ENCODE measurements at regions of chr22 and their contacts with region 1.

Region 1: GRCh38 chr22:37643225-37643847 is 3.9 kb downstream of the SH3BP1 start:
- DNase-seq: peak; percentile 67 to 95 (median 82)
- ATAC-seq: peak; percentile 88
- H3K4me3 ChIP-seq: no peak overlapping the region
- H3K27ac ChIP-seq: no peak overlapping the region
- H3K4me1 ChIP-seq: peaks cover 4 to 52% of the 10 kb centered on the region in 2 donors
- H3K27me3 ChIP-seq: no peaks in the 10 kb centered on the region
- CTCF ChIP-seq: peak; percentile 87 to 98

Region 2: DNA sequence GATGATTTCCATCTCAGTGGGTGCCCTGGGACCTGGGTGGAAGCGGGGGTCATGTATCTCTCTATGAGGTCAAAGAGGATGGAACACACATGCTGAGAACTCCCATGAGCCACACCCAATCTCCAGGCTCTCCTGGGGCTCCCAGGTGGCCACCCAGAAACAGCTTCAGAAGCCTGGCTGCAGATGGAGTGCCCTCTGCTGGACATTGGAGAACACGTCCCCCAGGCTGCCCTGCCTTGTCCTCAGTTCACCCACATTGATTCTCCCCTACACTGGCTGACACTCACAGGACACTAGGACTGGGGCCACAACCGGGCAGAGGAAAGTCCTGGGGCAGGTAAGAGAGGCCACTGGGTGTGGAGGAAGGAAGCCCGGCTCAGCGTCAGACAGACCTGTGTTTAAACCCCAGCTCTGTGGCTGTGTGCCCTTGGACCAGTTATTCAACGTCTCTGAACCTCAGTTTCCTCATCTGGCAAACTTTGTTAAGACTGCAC is 38.3 kb after region 1 on chr22:
- intact Hi-C with region 1: loop called in 1 of 2 experiments (anchors 5 kb)
- DNase-seq: peak; percentile 40 to 87 (median 73)
- ATAC-seq: peak; percentile 65
- H3K4me3 ChIP-seq: no peak overlapping the region
- H3K27ac ChIP-seq: no peak overlapping the region
- H3K4me1 ChIP-seq: peaks cover 8 to 38% of the 10 kb centered on the region in 2 donors
- H3K27me3 ChIP-seq: no peaks in the 10 kb centered on the region
- CTCF ChIP-seq: peak; percentile 88 to 90

Region 3: DNA sequence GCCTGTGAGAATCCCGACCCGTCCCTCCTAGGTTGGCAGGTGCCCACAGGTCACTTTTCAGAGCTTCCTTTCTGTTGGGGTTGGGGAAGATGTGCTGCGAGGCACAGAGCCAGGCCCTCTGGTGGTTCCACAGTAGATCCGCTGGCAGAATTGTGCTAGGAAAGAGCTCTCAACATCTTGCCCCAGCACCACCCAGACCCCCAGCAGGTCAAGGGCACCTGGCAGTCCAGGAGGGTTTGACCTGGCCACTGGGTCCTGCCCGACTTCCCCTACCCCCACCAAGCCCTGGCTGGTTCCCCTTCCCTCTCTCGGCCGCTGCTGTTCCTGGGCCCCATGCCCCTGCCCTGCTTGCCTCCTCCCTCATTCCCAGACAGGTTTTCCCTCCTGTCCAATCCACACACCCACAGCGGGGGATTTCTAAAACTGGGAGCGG is 138.2 kb after region 1 on chr22:
- intact Hi-C with region 1: loop called in 1 of 2 experiments (anchors 10 kb)
- DNase-seq: no peak
- ATAC-seq: no peak
- H3K4me3 ChIP-seq: no peak overlapping the region
- H3K27ac ChIP-seq: no peak overlapping the region
- H3K4me1 ChIP-seq: peaks cover 0 to 5% of the 10 kb centered on the region in 2 donors
- H3K27me3 ChIP-seq: no peaks in the 10 kb centered on the region
- CTCF ChIP-seq: no peak